HEK293 (cell line): ENCODE measurements at regions of chr3 and their contacts with region 1.

Region 1: DNA sequence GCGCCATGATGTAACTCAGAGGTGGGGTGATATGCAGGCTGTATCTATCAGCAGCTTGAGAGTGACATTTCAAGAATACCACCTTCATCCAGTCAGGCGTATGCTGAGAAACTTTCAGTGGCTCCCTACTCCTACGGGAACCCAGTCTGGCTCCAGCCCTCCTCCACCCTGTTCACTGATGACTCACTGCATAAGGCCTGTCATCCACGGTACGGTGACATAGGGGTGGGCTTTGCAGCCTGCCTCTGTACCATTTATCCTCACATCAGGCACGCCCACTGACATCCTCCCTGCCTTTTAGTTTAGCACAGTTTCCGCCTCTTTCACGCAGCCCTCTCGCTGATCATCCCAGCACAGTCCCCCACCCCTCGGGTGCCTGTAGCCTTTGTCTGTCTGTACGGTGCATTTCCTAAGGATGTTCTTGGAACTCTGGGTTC is 11.7 kb downstream of the PXYLP1 start:
- H3K4me3 ChIP-seq: no peak overlapping the region
- H3K27ac ChIP-seq: no peak overlapping the region
- H3K4me1 ChIP-seq: peaks cover 6% of the 10 kb centered on the region; the same call in 1 of the 2 replicates
- CTCF ChIP-seq: no peak

Region 2: GRCh38 chr3:140816372-140817195 is 426.7 kb before region 1 on chr3:
- CTCF ChIA-PET with region 1: no interaction called
- POLR2A ChIA-PET with region 1: no interaction called
- H3K4me3 ChIP-seq: no peak overlapping the region
- H3K27ac ChIP-seq: no peak overlapping the region
- H3K4me1 ChIP-seq: no peaks in the 10 kb centered on the region
- CTCF ChIP-seq: no peak

Region 3: DNA sequence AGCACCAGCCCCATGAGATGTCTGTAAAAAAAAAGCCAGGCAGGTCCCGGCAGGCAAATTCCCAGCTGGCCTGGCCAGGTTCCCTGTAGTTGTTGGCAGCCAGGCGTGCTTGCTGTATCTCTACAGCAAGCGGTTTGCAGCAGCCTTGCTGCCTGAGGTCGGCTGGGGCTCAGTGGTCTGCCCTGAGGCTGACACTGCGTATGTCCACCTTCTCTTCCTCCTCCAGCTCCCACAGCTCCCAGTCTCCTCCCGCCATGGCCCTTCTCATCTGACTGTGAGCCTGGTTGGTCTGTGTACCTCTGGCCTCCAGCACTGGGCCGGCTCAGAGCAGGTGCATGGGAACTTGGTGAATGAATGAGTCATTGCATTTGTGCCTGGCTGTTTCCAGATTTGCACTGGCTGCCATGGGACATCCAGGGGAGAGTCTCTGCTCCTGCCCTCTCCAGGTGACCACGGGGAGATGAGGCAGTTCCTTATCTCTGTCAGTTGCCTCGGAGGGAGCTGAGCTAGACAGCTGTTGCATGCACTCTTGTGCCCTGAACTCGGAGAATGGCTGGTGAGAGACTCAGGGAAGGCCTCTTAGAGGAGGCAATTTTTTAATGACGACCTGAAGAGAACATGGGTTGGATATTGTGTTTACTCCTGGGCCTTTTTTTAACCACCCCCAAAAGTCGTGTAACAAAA is 149.2 kb before region 1 on chr3:
- CTCF ChIA-PET with region 1: no interaction called
- POLR2A ChIA-PET with region 1: no interaction called
- H3K4me3 ChIP-seq: no peak overlapping the region
- H3K27ac ChIP-seq: no peak overlapping the region
- H3K4me1 ChIP-seq: no peaks in the 10 kb centered on the region
- CTCF ChIP-seq: no peak

Region 4: DNA sequence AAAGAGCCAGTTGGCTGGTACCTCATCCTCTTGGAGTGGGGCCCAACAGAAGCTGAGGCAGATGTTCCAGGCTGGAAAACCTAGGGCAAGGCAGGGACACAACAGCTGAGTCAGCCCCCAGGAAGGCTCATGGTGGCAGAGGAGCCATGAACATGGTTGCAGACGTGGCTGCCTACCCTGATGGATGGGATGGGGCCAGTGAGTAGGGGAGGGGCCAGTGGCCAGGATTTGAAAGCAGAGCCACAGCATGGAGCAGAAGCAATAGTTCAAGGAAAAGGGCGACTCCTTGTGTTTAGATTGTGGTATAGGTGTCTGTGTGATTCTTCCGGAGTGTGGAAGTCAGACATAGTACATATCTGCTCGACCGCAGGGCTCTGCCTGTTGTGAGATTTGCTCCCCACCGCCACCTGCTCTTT is 12.6 kb after region 1 on chr3:
- CTCF ChIA-PET with region 1: interaction called, 22 read pairs
- POLR2A ChIA-PET with region 1: no interaction called
- H3K4me3 ChIP-seq: no peak overlapping the region
- H3K27ac ChIP-seq: no peak overlapping the region
- H3K4me1 ChIP-seq: no peaks in the 10 kb centered on the region
- CTCF ChIP-seq: no peak

Region 5: GRCh38 chr3:141431411-141432378 is 188.4 kb after region 1 on chr3:
- CTCF ChIA-PET with region 1: no interaction called
- POLR2A ChIA-PET with region 1: no interaction called
- H3K4me3 ChIP-seq: no peak overlapping the region
- H3K27ac ChIP-seq: no peak overlapping the region
- H3K4me1 ChIP-seq: no peaks in the 10 kb centered on the region
- CTCF ChIP-seq: no peak